CD8-positive, alpha-beta T cell (primary cell): ENCODE measurements at regions of chr4 and their contacts with region 1.

Region 1: DNA sequence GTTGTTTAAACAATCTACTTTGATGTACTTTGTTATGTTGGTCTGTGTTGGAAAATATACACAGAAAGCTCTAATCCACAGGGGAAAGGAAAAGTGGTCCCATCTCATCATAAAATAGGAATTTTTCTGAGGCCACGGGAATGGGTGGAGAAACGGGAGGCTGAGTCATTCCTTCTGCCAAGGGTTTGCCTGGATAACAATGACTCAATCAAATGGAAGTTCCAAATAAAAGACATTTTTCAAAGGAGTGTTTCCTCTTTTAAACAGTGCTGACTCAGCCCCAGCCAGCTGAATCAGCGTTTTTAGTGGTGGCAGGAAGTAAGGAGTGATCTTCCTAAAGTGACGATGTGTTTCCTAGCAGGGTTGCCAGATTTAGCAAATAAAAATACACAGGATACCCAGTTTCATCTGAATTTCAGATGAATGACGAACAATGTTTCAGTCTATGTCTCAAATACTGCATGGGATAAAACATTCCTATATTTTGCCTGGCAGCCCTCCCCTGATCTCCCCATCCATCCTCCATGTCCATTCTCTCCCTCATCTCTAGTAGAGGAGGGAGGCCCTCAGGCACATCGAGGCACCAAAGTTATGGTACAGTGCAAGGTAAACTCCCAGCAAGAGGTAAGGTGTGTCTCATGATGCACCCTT is 345.4 kb upstream of the GATB start:
- DNase-seq: peak in 2 of 9 experiments; percentile 28 to 46
- ATAC-seq: no peak
- H3K4me3 ChIP-seq: no peak overlapping the region
- H3K4me3 Mint-ChIP-seq: peak overlapping the region; percentile 20
- H3K27ac ChIP-seq: no peak overlapping the region
- H3K27ac Mint-ChIP-seq: peak overlapping the region; percentile 99
- H3K4me1 ChIP-seq: peaks cover 97% of the 10 kb centered on the region
- H3K4me1 Mint-ChIP-seq: peaks cover 96% of the 10 kb centered on the region
- H3K27me3 ChIP-seq: no peaks in the 10 kb centered on the region
- H3K27me3 Mint-ChIP-seq: no peaks in the 10 kb centered on the region
- CTCF ChIP-seq: no peak

Region 2: DNA sequence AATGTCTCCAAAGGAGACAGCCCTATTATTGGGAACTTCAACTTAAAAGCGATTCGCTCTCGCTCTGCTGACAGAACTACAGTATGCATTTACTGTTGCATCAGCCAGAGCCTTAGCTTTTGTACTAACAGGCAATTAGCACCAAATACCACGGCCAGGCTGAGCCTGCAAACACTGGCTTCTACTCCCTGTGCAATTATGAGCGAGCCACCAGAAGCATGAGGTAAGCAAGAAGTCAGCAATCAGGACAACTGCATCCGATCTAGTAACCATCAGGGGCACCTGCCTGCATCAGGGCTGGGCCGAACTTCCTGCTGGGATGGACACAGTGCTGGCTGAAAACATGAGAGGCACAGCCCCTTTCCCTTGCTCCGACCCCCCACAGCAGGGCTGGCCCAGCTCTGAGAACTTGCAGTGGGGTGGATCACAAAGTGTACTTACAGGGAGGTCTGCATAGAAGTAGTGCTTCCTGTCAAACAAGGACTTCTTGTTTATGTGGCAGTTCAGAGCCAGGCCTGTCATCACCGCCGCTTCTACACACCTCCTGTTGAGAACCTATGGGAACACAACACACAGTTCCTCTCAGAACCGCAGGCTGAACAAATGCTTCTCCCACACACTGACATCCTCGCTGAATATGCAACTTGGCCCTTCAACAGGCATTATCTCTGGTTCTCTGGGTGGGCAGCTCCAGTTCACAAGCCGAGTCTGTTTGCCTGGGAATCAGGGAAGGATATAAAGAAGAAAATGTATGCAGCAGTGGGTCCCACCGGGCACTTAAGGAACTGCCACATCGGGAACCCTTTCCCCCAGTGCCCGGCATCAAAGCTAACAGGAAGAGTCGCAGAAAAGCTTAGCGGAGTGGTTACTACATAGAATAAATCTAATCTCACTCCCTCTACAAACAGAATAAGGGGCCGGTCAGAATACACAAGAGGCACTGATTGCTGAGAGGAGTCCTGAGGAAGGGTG is 387.0 kb before region 1 on chr4:
- CTCF ChIA-PET with region 1: no interaction called
- POLR2A ChIA-PET with region 1: no interaction called
- intact Hi-C with region 1: no loop called
- DNase-seq: no peak
- ATAC-seq: no peak
- H3K4me3 ChIP-seq: no peak overlapping the region
- H3K4me3 Mint-ChIP-seq: no peak overlapping the region
- H3K27ac ChIP-seq: no peak overlapping the region
- H3K27ac Mint-ChIP-seq: no peak overlapping the region
- H3K4me1 ChIP-seq: no peaks in the 10 kb centered on the region
- H3K4me1 Mint-ChIP-seq: peaks cover under 1% of the 10 kb centered on the region
- H3K27me3 ChIP-seq: no peaks in the 10 kb centered on the region
- H3K27me3 Mint-ChIP-seq: no peaks in the 10 kb centered on the region
- CTCF ChIP-seq: no peak

Region 3: GRCh38 chr4:152255437-152256011 is 149.3 kb after region 1 on chr4:
- CTCF ChIA-PET with region 1: no interaction called
- POLR2A ChIA-PET with region 1: interaction called, 4 read pairs
- intact Hi-C with region 1: loop called (anchors 10 kb)
- DNase-seq: peak; percentile 15 to 87 (median 69)
- ATAC-seq: peak; percentile 98
- H3K4me3 ChIP-seq: no peak overlapping the region
- H3K4me3 Mint-ChIP-seq: no peak overlapping the region
- H3K27ac ChIP-seq: peak overlapping the region in 1 of 2 experiments; percentile 40
- H3K27ac Mint-ChIP-seq: no peak overlapping the region
- H3K4me1 ChIP-seq: peaks cover 49% of the 10 kb centered on the region
- H3K4me1 Mint-ChIP-seq: peaks cover 23% of the 10 kb centered on the region
- H3K27me3 ChIP-seq: no peaks in the 10 kb centered on the region
- H3K27me3 Mint-ChIP-seq: no peaks in the 10 kb centered on the region
- CTCF ChIP-seq: no peak

Region 4: DNA sequence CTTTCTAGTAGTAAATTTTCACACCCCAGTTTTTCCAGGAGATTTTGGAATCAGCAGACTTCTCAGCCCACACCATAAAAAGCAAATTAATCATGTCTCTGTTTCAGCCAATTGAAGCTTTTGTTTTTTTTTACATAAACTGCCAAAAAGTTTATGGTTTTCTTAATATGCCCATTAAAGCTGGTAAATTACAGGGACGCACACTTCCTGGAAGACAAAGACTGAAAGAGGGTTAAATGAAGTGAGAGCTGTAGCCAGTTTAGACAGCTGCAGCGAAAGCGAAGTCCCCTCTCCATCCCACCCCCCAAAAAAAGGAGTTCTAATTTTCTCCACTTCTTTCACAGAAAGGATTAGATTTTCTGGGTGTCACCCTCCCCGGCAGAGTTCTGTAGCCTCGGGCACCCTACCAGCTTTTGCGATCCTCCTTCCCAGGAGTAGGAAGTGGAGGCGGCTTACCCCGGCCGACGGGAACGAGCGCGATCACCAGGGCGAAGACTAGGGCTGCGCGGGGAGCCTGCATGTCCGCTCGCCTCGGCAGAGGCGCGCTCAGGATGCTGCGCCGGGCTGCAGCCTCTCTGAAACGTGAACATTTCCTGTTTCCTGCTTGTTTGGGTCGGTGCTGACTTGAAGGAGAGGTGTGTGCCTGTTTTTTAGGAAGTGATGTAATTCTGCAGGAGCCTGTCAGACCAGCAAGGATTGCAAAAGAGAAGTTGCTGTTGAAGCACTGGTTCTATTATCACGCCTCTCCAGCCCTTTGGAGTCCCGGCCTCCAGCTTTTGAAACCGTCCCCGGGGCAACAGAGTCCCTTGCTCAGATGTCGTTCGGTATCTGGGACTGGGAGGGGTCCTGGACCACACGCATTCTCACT is 573.4 kb after region 1 on chr4 and contains the start of gene TMEM154:
- CTCF ChIA-PET with region 1: no interaction called
- POLR2A ChIA-PET with region 1: no interaction called
- intact Hi-C with region 1: loop called in 1 of 2 experiments (anchors 10 kb)
- DNase-seq: peak; percentile 44 to 86 (median 71)
- ATAC-seq: peak; percentile 97
- H3K4me3 ChIP-seq: peak within 1 kb of the TSS; percentile 67 to 68
- H3K4me3 Mint-ChIP-seq: peak within 1 kb of the TSS; percentile 93
- H3K27ac ChIP-seq: peak within 1 kb of the TSS; percentile 58 to 67
- H3K27ac Mint-ChIP-seq: peak within 1 kb of the TSS; percentile 95
- H3K4me1 ChIP-seq: peaks cover 12% of the 10 kb centered on the region
- H3K4me1 Mint-ChIP-seq: peaks cover 46% of the 10 kb centered on the region
- H3K27me3 ChIP-seq: no peaks in the 10 kb centered on the region
- H3K27me3 Mint-ChIP-seq: no peaks in the 10 kb centered on the region
- CTCF ChIP-seq: no peak
- total RNA-seq, gene TMEM154: 10.0 TPM